ENCODE measurements at regions of chr4 and their contacts with region 1.

Region 1: GRCh38 chr4:140851032-140851636 is 94.9 kb upstream of the TBC1D9 start:
- DNase-seq: peak in 1 of 9 donors; percentile 5
- ATAC-seq: peak; percentile 54
- H3K4me3 ChIP-seq: no peak overlapping the region
- H3K4me3 Mint-ChIP-seq: no peak overlapping the region
- H3K27ac ChIP-seq: no peak overlapping the region
- H3K27ac Mint-ChIP-seq: no peak overlapping the region
- H3K4me1 ChIP-seq: no peaks in the 10 kb centered on the region
- H3K4me1 Mint-ChIP-seq: peaks cover 0 to 2% (median 0%) of the 10 kb centered on the region in 7 donors
- H3K27me3 ChIP-seq: no peaks in the 10 kb centered on the region
- H3K27me3 Mint-ChIP-seq: peaks cover 20 to 56% (median 42%) of the 10 kb centered on the region in 5 donors

Region 2: DNA sequence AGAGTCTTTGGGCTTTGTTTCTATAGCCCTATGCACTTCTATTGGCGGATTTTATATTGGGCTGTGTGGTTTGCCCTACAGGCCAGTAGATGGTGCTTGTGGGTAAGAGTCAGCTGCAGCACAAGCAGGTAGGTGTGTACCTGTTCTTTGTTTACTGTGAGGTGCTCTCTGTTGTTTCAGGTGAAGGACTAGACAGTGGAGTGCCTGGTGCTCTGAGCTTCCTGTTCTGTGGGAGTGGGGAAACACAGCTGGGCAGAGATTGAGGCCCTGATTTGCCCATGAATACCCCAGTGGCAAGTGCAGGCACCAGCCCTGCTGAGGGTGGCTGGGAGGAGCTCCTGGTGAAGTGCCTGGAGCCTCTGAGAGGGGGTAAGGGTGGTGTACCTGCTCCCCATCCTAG is 256.1 kb before region 1 on chr4:
- CTCF ChIA-PET with region 1: no interaction called
- POLR2A ChIA-PET with region 1: no interaction called
- intact Hi-C with region 1: loop called in 1 of 2 experiments (anchors 10 kb)
- DNase-seq: no peak
- ATAC-seq: peak; percentile 32
- H3K4me3 ChIP-seq: no peak overlapping the region
- H3K4me3 Mint-ChIP-seq: no peak overlapping the region
- H3K27ac ChIP-seq: no peak overlapping the region
- H3K27ac Mint-ChIP-seq: no peak overlapping the region
- H3K4me1 ChIP-seq: no peaks in the 10 kb centered on the region
- H3K4me1 Mint-ChIP-seq: peaks cover 0 to 12% (median 5%) of the 10 kb centered on the region in 7 donors
- H3K27me3 ChIP-seq: no peaks in the 10 kb centered on the region
- H3K27me3 Mint-ChIP-seq: peaks cover 21 to 42% (median 34%) of the 10 kb centered on the region in 5 donors

Region 3: GRCh38 chr4:140686796-140687195 is 164.3 kb before region 1 on chr4:
- CTCF ChIA-PET with region 1: no interaction called
- POLR2A ChIA-PET with region 1: no interaction called
- intact Hi-C with region 1: no loop called
- DNase-seq: no peak
- ATAC-seq: no peak
- H3K4me3 ChIP-seq: no peak overlapping the region
- H3K4me3 Mint-ChIP-seq: no peak overlapping the region
- H3K27ac ChIP-seq: no peak overlapping the region
- H3K27ac Mint-ChIP-seq: no peak overlapping the region
- H3K4me1 ChIP-seq: no peaks in the 10 kb centered on the region
- H3K4me1 Mint-ChIP-seq: no peaks in the 10 kb centered on the region
- H3K27me3 ChIP-seq: no peaks in the 10 kb centered on the region
- H3K27me3 Mint-ChIP-seq: peaks cover 12 to 36% (median 23%) of the 10 kb centered on the region in 5 donors

Region 4: GRCh38 chr4:141797966-141798365 is 946.8 kb after region 1 on chr4:
- CTCF ChIA-PET with region 1: no interaction called
- POLR2A ChIA-PET with region 1: no interaction called
- intact Hi-C with region 1: no loop called
- DNase-seq: no peak
- ATAC-seq: no peak
- H3K4me3 ChIP-seq: no peak overlapping the region
- H3K4me3 Mint-ChIP-seq: no peak overlapping the region
- H3K27ac ChIP-seq: no peak overlapping the region
- H3K27ac Mint-ChIP-seq: no peak overlapping the region
- H3K4me1 ChIP-seq: no peaks in the 10 kb centered on the region
- H3K4me1 Mint-ChIP-seq: peaks cover 0 to 2% (median 0%) of the 10 kb centered on the region in 7 donors
- H3K27me3 ChIP-seq: no peaks in the 10 kb centered on the region
- H3K27me3 Mint-ChIP-seq: peaks cover 0 to 17% (median 9%) of the 10 kb centered on the region in 5 donors